Activated CD4-positive, alpha-beta T cell treated with anti-CD3 and anti-CD28 coated beads for 36 hours (primary cell): ENCODE measurements at regions of chr4 and their contacts with region 1.

Region 1: GRCh38 chr4:2811830-2812611 is 19.1 kb downstream of the SH3BP2 start:
- DNase-seq: peak; percentile 78
- ATAC-seq: peak; percentile 83
- H3K4me3 Mint-ChIP-seq: peak overlapping the region; percentile 96
- H3K27ac Mint-ChIP-seq: peak overlapping the region; percentile 97
- H3K4me1 Mint-ChIP-seq: peaks cover 48% of the 10 kb centered on the region
- H3K27me3 Mint-ChIP-seq: no peaks in the 10 kb centered on the region

Region 2: DNA sequence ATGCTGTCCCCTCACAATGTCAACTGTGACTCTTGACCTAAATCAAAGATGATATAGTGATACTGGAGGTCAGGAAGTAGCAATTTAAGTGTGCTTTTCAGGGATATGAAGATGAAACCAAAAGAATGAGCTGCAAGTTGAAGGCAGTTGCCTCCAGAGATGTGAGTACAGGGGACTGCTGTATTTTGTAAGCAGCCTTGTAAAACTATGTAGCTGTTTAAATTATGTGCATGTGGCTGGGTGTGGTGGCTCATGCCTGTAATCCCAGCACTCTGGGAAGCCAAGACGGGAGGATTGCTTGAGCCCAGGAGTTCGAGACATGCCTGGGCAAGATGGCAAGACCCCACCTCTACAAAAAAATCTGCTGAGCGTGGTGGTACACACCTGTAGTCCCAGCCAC is 40.8 kb before region 1 on chr4:
- CTCF ChIA-PET with region 1: no interaction called
- POLR2A ChIA-PET with region 1: no interaction called
- intact Hi-C with region 1: loop called in 1 of 2 experiments (anchors 5 kb)
- DNase-seq: no peak
- ATAC-seq: peak; percentile 62
- H3K4me3 Mint-ChIP-seq: no peak overlapping the region
- H3K27ac Mint-ChIP-seq: peak overlapping the region; percentile 70
- H3K4me1 Mint-ChIP-seq: peaks cover 27% of the 10 kb centered on the region
- H3K27me3 Mint-ChIP-seq: no peaks in the 10 kb centered on the region